ENCODE measurements at regions of chr14 and their contacts with region 1.

Region 1: GRCh38 chr14:60164712-60165546 is at the start of gene DHRS7:
- DNase-seq: peak; percentile 86
- H3K4me3 ChIP-seq: peak within 1 kb of the TSS; percentile 53 to 83 (median 66)
- H3K27ac ChIP-seq: peak within 1 kb of the TSS; percentile 90 to 96 (median 94)
- H3K4me1 ChIP-seq: peaks cover 5 to 25% (median 7%) of the 10 kb centered on the region in 4 donors
- H3K27me3 ChIP-seq: no peaks in the 10 kb centered on the region
- CTCF ChIP-seq: peak in 3 of 5 experiments; percentile 44 to 56 (median 49)
- EP300 ChIP-seq: no peak
- POLR2A ChIP-seq: peak; percentile 74
- total RNA-seq, gene DHRS7: 22.4 to 154 (median 82.8) TPM

Region 2: GRCh38 chr14:59583755-59584154 is 581.2 kb before region 1 on chr14:
- in situ Hi-C with region 1: no loop called
- intact Hi-C with region 1: no loop called
- DNase-seq: no peak
- H3K4me3 ChIP-seq: no peak overlapping the region
- H3K27ac ChIP-seq: no peak overlapping the region
- H3K4me1 ChIP-seq: peaks cover 0 to 4% (median 0%) of the 10 kb centered on the region in 4 donors
- H3K27me3 ChIP-seq: no peaks in the 10 kb centered on the region
- CTCF ChIP-seq: no peak
- EP300 ChIP-seq: no peak
- POLR2A ChIP-seq: no peak

Region 3: GRCh38 chr14:60035177-60035576 is 129.8 kb before region 1 on chr14:
- in situ Hi-C with region 1: no loop called
- intact Hi-C with region 1: no loop called
- DNase-seq: no peak
- H3K4me3 ChIP-seq: no peak overlapping the region
- H3K27ac ChIP-seq: no peak overlapping the region
- H3K4me1 ChIP-seq: no peaks in the 10 kb centered on the region
- H3K27me3 ChIP-seq: no peaks in the 10 kb centered on the region
- CTCF ChIP-seq: no peak
- EP300 ChIP-seq: no peak
- POLR2A ChIP-seq: no peak

Region 4: GRCh38 chr14:60079724-60080123 is 85.2 kb before region 1 on chr14:
- in situ Hi-C with region 1: loop called in 1 of 4 experiments (anchors 10 kb)
- intact Hi-C with region 1: no loop called
- DNase-seq: no peak
- H3K4me3 ChIP-seq: no peak overlapping the region
- H3K27ac ChIP-seq: no peak overlapping the region
- H3K4me1 ChIP-seq: no peaks in the 10 kb centered on the region
- H3K27me3 ChIP-seq: no peaks in the 10 kb centered on the region
- CTCF ChIP-seq: no peak
- EP300 ChIP-seq: no peak
- POLR2A ChIP-seq: no peak

Region 5: GRCh38 chr14:60091550-60092530 is 73.1 kb before region 1 on chr14 and contains the start of gene PCNX4:
- in situ Hi-C with region 1: loop called in 1 of 4 experiments (anchors 10 kb)
- intact Hi-C with region 1: loop called (anchors 10 kb)
- DNase-seq: peak; percentile 98
- H3K4me3 ChIP-seq: peak within 1 kb of the TSS; percentile 61 to 79 (median 71)
- H3K27ac ChIP-seq: peak within 1 kb of the TSS; percentile 96 to 99 (median 98)
- H3K4me1 ChIP-seq: peaks cover 19 to 41% (median 23%) of the 10 kb centered on the region in 4 donors
- H3K27me3 ChIP-seq: no peaks in the 10 kb centered on the region
- CTCF ChIP-seq: peak in 1 of 5 experiments; percentile 6
- EP300 ChIP-seq: peak; percentile 52
- POLR2A ChIP-seq: peak; percentile 95
- total RNA-seq, gene PCNX4: 32.9 to 118 (median 54.8) TPM

Measured in transverse colon (tissue), 4 donors.